Ovary (tissue), 10 donors: ENCODE measurements at regions of chr3 and their contacts with region 1.

Region 1: DNA sequence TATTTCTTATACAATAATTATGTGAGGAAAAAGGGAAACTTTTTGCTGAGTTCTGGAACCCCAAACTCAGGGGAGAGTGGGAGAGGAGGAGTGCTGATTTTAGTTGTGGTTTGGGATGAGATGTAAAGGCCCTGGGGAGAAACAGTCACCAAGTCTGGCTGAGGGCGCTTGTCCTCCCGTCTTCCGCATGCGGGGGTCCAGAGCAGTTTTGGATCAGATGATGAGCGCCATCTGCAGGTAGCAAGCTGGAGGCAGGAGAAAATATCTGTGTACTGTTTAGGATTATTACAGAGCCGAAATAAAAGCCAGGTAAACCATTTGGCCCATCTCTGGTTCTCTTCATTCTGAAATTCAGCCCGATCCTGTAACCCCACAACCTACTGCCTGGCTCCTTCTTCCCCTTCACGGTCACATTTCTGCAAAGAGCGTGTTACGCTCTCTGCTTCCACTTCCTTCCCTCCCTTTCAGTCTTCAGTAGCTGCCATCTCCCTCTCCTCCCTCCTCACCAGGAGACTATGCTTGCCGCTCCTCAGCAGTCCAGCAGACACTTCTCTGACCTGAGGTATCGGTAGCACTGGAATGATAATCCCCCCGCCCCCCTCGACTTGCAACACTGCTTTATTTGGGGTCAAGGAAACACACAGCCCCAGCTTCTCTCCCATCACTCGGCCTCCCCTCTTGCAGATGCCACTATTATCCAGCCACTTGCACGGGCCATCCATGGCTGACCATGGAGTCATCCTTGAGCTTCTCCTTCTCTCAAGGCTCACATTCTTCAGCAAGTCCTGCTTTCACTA is 1.4 kb upstream of the PARP14 start:
- DNase-seq: peak; percentile 81 to 87 (median 84)
- H3K4me3 ChIP-seq: peak overlapping the region; percentile 71
- H3K27ac ChIP-seq: peak overlapping the region; percentile 95 to 97
- H3K4me1 ChIP-seq: peaks cover 16% of the 10 kb centered on the region
- H3K27me3 ChIP-seq: no peaks in the 10 kb centered on the region
- CTCF ChIP-seq: peak; percentile 74 to 81 (median 79)
- EP300 ChIP-seq: no peak
- POLR2A ChIP-seq: no peak

Region 2: DNA sequence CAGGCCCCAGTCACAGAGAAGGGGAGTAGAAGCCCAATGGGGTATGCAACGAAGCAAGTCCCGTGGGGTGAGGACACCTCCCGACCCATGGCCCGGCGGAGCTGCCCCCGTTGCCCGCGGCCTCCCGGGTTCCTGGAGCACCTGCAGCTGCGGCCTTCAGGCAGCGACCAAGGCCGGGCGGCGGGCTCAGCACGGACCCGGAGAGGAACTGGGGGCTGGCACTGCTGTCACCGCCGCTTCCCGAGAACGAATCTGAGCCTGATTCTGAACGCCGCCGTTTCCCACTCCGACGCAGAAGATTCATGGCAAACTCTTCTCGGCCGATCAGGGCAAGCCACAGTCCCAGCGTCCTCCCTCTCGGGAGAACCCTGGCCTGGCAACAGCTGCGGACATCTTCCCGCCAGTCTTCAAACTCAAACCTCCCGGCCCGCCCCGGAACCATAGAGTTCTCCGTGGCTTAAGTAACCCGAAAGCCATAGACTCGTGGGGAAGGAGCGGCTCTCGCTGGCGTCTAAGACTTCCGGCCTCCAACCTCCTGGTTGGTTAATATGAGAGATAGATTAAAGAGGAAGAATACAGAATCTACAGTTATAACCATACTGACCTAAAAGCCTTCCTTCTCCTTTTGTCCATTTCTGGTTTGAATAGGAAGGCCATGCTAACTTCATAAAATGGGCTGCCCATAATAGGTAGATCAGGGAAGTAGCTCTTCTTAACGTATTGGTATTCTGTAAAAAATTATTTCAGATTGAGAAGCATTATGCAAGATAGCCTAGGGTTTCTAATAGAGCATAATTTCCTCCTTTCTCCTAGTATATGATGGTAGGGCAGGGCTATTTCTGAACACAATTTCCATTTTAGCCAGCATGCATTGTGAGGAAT is 1133.5 kb before region 1 on chr3 and contains the start of gene POLQ:
- intact Hi-C with region 1: loop called in 1 of 4 experiments (anchors 5 kb)
- DNase-seq: peak; percentile 82 to 89 (median 84)
- H3K4me3 ChIP-seq: peak within 1 kb of the TSS; percentile 42
- H3K27ac ChIP-seq: peak within 1 kb of the TSS; percentile 8 to 10
- H3K4me1 ChIP-seq: peaks cover 1% of the 10 kb centered on the region
- H3K27me3 ChIP-seq: no peaks in the 10 kb centered on the region
- CTCF ChIP-seq: no peak
- EP300 ChIP-seq: no peak
- POLR2A ChIP-seq: no peak
- total RNA-seq, gene POLQ: 0.10 to 0.55 (median 0.24) TPM

Region 3: GRCh38 chr3:122101646-122102045 is 577.6 kb before region 1 on chr3:
- intact Hi-C with region 1: loop called in 1 of 4 experiments (anchors 10 kb)
- DNase-seq: no peak
- H3K4me3 ChIP-seq: no peak overlapping the region
- H3K27ac ChIP-seq: no peak overlapping the region
- H3K4me1 ChIP-seq: peaks cover 3% of the 10 kb centered on the region
- H3K27me3 ChIP-seq: no peaks in the 10 kb centered on the region
- CTCF ChIP-seq: peak in 1 of 3 donors; percentile 49
- EP300 ChIP-seq: no peak
- POLR2A ChIP-seq: no peak

Region 4: GRCh38 chr3:122392868-122393844 is 286.1 kb before region 1 on chr3:
- intact Hi-C with region 1: loop called in 2 of 4 experiments (anchors 5 to 10 kb)
- DNase-seq: no peak
- H3K4me3 ChIP-seq: no peak overlapping the region
- H3K27ac ChIP-seq: no peak overlapping the region
- H3K4me1 ChIP-seq: peaks cover 4% of the 10 kb centered on the region
- H3K27me3 ChIP-seq: no peaks in the 10 kb centered on the region
- CTCF ChIP-seq: peak; percentile 45 to 60 (median 51)
- EP300 ChIP-seq: no peak
- POLR2A ChIP-seq: no peak

Region 5: DNA sequence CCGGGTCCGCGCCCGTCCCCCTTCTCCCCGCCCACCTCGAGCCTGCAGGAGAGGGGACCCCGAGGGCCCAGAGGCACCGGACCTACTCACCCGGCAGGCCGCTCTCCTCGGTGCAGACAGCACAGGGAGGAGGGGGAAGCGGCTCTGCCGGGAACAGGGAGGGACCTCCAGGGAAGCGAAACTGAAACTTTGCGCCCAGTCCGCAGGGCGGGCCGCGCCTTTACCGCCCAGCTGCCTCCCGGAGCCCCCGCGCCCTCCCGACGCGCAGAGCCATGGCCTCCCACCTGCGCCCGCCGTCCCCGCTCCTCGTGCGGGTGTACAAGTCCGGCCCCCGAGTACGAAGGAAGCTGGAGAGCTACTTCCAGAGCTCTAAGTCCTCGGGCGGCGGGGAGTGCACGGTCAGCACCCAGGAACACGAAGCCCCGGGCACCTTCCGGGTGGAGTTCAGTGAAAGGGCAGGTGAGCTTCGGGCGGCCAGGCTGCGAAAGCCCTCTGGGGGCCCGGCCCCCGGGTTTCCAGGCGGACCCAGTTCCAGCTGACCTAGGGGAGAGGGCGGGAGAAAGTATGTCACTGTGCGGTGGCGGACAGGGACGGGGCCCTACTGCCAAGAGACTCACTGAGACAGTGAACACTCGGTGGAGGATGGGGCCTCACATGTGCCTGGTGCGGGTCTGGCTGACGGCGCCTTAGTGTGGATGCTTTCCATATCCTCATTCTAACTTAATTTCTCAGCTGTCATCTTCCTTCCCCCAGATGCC is 114.9 kb before region 1 on chr3 and contains the starts of genes DTX3L and PARP9:
- intact Hi-C with region 1: loop called (anchors 5 to 10 kb)
- DNase-seq: peak; percentile 82 to 86 (median 83)
- H3K4me3 ChIP-seq: peak within 1 kb of the TSS; percentile 76
- H3K27ac ChIP-seq: peak within 1 kb of the TSS; percentile 86 to 93
- H3K4me1 ChIP-seq: peaks cover 5% of the 10 kb centered on the region
- H3K27me3 ChIP-seq: no peaks in the 10 kb centered on the region
- CTCF ChIP-seq: peak in 1 of 3 donors; percentile 12
- EP300 ChIP-seq: no peak
- POLR2A ChIP-seq: peak; percentile 73
- total RNA-seq, gene DTX3L: 11.0 to 34.0 (median 30.7) TPM
- total RNA-seq, gene PARP9: 15.6 to 30.1 (median 23.0) TPM